ENCODE measurements at regions of chr2 and their contacts with region 1.

Region 1: DNA sequence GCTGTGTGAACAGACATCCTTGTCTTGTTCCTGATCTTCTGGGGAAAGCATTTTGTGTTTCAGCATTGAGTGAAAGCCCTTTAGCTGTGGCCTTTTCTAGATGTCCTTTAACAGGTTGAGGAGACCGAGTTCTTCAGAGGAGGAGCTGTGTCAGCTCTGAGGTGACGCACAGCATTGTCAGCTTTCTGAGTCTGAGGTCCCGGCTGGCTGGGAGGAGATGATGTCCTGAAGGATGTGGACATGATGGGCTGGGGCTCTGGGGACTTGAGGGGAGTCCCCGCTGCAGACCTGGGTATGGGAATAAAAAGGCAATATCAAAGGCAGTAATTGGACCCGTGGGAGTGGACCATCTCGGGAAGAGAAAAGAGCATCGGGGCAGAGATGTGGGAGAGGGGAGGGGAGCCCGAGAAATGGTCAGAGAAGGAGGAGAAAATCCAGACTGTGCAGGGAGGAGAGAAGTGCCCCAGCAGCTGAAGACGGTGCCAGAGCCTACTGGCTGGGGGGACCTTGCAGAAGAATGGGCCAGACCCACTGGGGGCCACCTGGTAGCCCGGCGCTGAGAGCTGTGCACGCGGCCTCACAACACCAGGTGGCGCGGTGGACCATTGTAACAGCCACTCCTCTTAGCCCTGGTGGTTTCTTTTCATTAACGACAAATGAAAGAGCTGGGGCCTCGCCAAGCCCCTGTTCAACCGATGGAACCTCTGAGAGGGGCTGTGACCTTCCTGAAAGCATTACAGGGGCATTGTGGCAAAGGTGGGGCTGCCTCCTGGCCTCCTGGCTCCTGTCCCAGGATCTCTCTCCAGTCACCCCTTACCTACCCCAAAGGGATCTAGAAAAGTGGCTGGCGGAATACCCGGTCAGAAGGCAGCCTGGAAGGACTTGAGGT is 61.6 kb downstream of the ST3GAL5 start:
- DNase-seq: peak; percentile 78
- H3K27ac ChIP-seq: no peak overlapping the region
- CTCF ChIP-seq: peak; percentile 86

Region 2: DNA sequence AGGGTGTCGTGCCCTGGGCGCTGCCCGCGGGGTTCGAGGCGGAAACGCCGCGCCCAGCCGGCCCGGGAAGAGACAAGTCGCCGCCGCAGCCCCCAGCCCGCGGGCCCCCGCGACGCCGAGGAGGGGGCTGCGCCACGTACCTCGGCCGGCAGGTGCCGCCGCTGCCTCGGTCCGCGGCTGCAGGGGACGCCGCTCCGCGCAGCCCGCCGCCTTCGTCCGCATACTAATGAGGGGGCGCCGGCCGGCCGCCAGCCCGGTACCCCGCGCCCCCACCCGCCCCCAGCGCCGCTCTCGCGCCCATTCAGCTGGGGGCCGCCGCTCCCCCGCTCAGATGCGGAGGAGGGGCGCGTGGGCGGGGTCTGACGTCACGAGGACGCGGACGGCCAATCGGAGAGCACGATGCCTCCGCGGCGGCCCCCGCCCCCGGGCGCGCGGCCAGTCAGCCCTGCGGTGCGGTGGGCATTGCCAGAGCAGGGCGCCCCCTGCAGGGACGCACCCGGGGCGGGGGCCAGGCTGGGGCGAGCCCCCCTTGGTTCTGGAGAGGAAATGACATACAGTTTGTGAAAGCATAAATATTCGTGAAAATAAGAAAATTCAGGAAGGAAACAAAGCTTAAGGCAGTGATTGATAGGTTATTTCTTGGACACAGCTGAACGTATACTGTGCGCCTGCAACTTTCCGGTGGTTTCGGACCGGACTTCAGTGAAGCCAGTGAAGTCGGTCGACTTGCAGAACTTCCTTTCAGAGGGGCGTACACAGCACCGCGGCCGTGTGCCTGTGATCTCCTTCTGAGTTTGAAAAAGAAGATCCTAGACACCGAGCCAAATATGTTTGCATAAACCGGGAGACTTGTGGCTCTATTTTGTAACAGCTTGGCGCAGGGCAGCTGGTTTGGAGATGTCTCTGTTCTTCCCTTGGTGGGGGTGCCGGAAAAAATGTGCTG is 61.7 kb after region 1 on chr2 and contains the start of gene ST3GAL5:
- CTCF ChIA-PET with region 1: interaction called, 12 read pairs
- POLR2A ChIA-PET with region 1: no interaction called
- DNase-seq: peak; percentile 85
- H3K27ac ChIP-seq: peak within 1 kb of the TSS; percentile 74
- CTCF ChIP-seq: peak; percentile 81

Region 3: GRCh38 chr2:86035883-86036668 is 208.8 kb after region 1 on chr2:
- CTCF ChIA-PET with region 1: interaction called, 14 read pairs
- POLR2A ChIA-PET with region 1: no interaction called
- DNase-seq: peak; percentile 25
- H3K27ac ChIP-seq: peak overlapping the region; percentile 51
- CTCF ChIP-seq: no peak

Region 4: DNA sequence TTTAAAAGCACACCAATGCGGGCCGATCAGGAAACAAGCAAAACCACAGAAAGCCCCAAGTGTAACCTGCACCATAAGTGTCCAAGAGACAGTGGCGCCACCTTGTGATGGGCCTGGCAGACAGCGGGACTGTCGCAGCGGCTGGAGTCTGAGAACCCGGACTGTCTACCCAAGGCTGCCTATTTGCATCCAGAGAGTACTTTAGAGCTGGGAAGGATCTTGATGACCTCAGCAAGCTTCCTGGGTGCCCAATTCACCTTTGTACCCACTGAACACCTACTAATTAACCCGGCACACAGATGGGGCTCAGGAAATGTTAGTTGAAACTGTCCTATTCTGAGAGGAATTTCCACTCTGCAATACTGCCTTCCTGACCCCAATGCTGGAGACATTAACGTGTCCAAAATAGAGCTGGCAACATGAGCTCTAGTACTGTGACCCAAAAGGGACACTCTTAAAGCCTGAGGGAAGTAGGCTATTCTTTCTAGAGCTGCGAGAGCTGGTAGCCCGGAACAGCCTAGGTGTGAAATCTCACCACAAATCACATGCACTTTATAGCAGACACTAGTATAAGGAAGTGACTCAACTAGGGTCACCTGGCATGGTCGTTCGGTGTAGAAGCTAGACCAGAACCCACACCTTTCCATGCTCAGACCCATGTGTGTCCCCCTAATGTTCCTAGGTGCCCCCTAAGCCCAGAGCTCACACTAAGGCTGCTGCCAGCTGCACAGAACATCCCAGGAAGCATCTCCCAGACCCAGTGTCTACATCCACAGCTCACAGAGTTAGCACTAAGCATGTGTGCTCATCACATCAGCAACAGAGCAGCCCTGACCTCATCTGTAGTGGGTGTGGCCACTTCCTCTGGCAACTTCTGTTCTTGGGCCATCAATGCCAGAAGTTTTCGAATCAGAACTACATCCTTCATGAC is 253.0 kb after region 1 on chr2:
- CTCF ChIA-PET with region 1: interaction called, 43 read pairs
- POLR2A ChIA-PET with region 1: interaction called, 3 read pairs
- DNase-seq: peak; percentile 30
- H3K27ac ChIP-seq: no peak overlapping the region; the same call in 1 of the 2 replicates
- CTCF ChIP-seq: peak; percentile 77